ENCODE measurements at regions of chr6 and their contacts with region 1.

Region 1: GRCh38 chr6:7541175-7542064 is at the start of gene DSP:
- DNase-seq: peak; percentile 79
- H3K27ac ChIP-seq: peak within 1 kb of the TSS; percentile 98
- CTCF ChIP-seq: no peak

Region 2: DNA sequence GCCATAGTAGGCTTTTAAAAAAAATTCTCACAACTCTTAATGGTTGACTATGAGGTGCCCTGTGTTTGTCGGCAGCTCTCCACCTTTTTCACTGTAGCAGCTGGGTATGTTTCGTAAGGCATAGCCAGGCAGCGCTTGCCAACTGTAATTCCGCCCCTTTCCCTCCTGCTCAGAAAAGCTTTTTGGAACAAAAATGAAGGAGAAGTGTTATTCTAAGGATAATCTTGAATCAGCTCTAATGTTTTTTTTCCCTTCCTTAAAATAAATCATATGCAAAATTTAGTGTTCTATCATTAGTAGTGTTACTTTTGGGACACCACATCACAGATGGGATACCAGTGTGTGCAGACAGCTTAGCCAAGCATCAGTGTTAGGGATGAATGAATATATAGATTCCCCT is 130.6 kb before region 1 on chr6:
- CTCF ChIA-PET with region 1: no interaction called
- POLR2A ChIA-PET with region 1: interaction called, 18 read pairs
- DNase-seq: no peak
- H3K27ac ChIP-seq: no peak overlapping the region
- CTCF ChIP-seq: no peak

Region 3: GRCh38 chr6:7479801-7480266 is 61.6 kb before region 1 on chr6:
- CTCF ChIA-PET with region 1: no interaction called
- POLR2A ChIA-PET with region 1: interaction called, 26 read pairs
- DNase-seq: peak; percentile 95
- H3K27ac ChIP-seq: peak overlapping the region; percentile 97
- CTCF ChIP-seq: no peak

Region 4: DNA sequence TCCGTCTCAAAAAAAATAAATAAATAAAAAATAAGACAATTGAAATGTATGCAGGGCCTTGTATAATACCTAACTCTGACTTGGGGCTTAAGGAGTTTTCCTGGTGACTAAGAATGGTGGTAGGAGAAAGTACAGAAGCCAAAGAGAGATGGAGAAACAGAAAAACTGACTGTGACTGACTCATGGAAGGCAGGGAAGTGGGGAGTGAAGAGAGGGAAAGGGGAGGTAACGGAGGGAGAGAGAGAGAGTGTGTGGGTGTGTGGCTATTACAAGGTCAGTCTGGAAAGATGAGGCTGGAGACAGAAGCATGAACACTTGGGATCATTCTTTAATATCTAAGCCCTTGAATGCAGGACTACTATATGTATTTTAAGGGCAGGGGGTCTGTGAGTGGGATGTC is 87.1 kb after region 1 on chr6:
- CTCF ChIA-PET with region 1: no interaction called
- POLR2A ChIA-PET with region 1: no interaction called
- DNase-seq: no peak
- H3K27ac ChIP-seq: no peak overlapping the region
- CTCF ChIP-seq: no peak